Prostate gland (tissue), 2 donors: ENCODE measurements at regions of chr6 and their contacts with region 1.

Region 1: GRCh38 chr6:108835218-108835850 is 12.9 kb upstream of the ARMC2 start:
- DNase-seq: peak; percentile 90
- H3K4me3 ChIP-seq: no peak overlapping the region
- H3K27ac ChIP-seq: no peak overlapping the region
- H3K4me1 ChIP-seq: no peaks in the 10 kb centered on the region
- H3K27me3 ChIP-seq: no peaks in the 10 kb centered on the region
- CTCF ChIP-seq: peak; percentile 83 to 98 (median 96)
- POLR2A ChIP-seq: no peak

Region 2: DNA sequence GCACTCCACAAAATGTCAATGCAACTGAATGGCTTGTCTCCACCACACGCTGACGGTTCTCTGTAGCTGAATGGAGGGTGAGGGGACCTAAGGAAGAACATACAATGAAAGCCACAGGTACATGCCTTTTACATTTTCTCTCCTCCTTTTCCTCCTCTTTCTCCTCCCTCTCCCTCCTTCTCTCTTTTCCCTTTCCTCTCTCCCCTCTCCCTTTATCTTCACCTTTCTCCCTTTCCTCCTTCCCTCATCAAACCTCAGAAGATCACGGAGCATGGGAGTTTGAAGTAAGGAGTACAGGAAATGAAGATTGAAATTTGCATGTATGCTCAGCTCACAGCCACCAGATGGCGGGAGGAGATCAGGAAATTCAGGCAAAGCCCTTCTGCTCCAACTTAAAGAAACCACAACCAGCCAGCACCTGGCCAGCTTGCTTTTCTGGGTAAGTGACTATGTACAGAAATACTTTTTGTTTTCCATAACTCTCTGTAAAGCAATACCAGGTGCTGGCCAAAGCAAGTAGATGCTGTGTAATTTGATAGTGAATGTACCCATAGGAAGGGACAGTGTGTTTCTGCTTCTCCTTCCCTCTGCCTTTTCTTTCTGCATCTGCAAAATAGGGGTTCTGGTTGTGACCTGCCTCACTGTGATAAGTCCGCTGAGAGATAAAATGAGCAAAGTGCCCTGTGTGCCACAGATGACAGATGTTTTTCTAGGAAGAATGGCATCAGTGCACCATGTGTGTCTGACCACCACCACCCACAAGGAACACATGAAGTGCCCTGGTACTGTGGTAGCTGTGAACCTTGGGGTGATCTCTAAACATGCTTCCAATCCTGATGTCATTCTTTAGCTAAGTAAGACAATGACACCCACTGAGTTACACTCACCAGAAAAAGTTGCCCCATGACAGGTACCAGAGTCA is 293.2 kb before region 1 on chr6:
- intact Hi-C with region 1: loop called (anchors 1 kb)
- DNase-seq: peak; percentile 77
- H3K4me3 ChIP-seq: no peak overlapping the region
- H3K27ac ChIP-seq: no peak overlapping the region
- H3K4me1 ChIP-seq: no peaks in the 10 kb centered on the region
- H3K27me3 ChIP-seq: no peaks in the 10 kb centered on the region
- CTCF ChIP-seq: peak; percentile 61 to 97 (median 94)
- POLR2A ChIP-seq: no peak

Region 3: DNA sequence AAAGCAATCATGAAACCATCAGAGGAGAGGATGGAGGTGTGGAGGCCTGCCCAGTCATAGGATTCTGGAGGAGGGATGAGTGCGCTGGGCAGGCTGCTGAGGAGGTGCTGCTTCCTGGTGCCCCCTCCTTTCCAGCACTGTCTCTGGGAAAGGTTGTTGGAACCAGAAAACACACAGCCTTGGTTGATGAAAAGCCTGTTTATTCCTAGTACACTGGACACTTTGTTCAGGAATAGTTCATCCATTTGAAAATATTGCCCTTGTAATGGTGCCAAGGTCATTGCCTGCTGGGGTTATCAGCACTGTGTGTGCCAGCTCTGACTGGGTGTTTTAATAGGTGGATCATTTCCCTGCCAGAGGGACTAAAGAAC is 70.8 kb before region 1 on chr6:
- intact Hi-C with region 1: no loop called
- DNase-seq: no peak
- H3K4me3 ChIP-seq: no peak overlapping the region
- H3K27ac ChIP-seq: no peak overlapping the region
- H3K4me1 ChIP-seq: no peaks in the 10 kb centered on the region
- H3K27me3 ChIP-seq: no peaks in the 10 kb centered on the region
- CTCF ChIP-seq: no peak
- POLR2A ChIP-seq: no peak

Region 4: DNA sequence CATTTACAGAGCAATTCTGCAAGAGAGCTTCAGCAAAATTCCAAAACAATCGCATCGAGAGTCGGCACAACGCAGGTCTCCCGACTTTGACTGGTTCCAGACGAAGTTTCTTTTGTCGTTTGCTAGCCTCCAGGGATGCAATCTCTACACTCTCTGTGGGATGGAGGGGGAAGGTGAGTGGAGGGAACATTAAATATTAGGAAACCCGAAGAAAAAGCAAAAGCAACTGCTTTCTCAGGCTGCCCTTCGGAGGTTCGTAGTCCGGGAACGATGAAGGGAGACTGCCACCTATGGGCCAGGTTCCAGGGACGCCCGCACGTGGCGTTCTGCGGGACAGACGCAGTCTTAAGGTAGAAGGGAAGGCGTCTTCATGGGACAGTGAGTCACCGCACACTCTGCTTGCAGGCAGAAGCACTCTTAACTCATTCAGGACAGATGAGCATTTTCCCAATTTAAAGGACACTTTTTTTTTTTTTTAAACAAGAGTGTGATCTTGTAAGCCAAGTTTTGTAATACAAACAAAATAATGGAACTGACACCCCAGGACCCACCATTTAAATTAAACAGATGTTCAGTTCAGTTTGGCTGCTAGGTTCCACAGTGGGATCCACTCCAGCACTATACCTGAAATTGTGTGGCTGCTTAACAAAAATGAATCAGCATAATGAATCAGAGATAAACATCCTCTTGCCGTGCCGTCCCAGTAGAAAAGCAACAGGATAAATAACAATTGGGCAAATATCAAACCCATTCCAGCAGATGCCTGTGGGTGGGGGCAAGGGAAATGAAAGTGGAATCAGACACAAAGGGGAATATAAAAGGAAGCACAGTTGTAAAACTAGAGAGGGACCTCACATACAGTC is 52.9 kb before region 1 on chr6:
- intact Hi-C with region 1: loop called (anchors 5 kb)
- DNase-seq: peak; percentile 90
- H3K4me3 ChIP-seq: peak overlapping the region; percentile 35 to 39
- H3K27ac ChIP-seq: peak overlapping the region; percentile 63 to 67
- H3K4me1 ChIP-seq: peaks cover 3% of the 10 kb centered on the region
- H3K27me3 ChIP-seq: no peaks in the 10 kb centered on the region
- CTCF ChIP-seq: peak; percentile 55 to 81 (median 80)
- POLR2A ChIP-seq: no peak

Region 5: GRCh38 chr6:108896111-108896661 is 60.9 kb after region 1 on chr6:
- intact Hi-C with region 1: loop called (anchors 10 kb)
- DNase-seq: no peak
- H3K4me3 ChIP-seq: no peak overlapping the region
- H3K27ac ChIP-seq: no peak overlapping the region
- H3K4me1 ChIP-seq: no peaks in the 10 kb centered on the region
- H3K27me3 ChIP-seq: no peaks in the 10 kb centered on the region
- CTCF ChIP-seq: no peak
- POLR2A ChIP-seq: no peak